BJ (cell line): ENCODE measurements at regions of chr19 and their contacts with region 1.

Region 1: DNA sequence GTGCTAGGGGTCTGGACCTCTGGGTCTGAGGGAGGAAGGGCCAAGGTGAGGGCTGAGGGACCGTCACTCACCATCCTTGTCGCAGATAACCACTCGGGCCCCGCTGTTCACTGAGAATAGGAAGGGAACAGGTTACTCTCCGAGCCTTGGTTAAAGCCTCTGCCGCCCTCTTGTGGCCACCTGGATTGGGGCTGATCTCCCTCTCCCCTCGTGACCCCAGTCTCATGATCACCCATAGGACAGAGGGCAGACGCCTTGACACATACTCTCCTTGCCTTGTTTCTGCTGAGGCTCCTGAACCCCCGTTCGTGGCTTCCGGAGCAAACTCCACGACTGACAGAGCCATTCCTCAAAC is 580 bp downstream of the HSD17B14 start:
- DNase-seq: peak; percentile 20
- H3K4me3 ChIP-seq: peak overlapping the region; percentile 38
- H3K27me3 ChIP-seq: no peaks in the 10 kb centered on the region
- CTCF ChIP-seq: peak; percentile 92

Region 2: GRCh38 chr19:49127674-49128544 is 292.2 kb after region 1 on chr19:
- CTCF ChIA-PET with region 1: no interaction called
- POLR2A ChIA-PET with region 1: interaction called, 12 read pairs
- DNase-seq: peak; percentile 77
- H3K4me3 ChIP-seq: peak overlapping the region; percentile 40
- H3K27me3 ChIP-seq: peaks cover 2% of the 10 kb centered on the region
- CTCF ChIP-seq: peak; percentile 20; the same call in 1 of the 2 replicates